Activated CD4-positive, alpha-beta T cell treated with anti-CD3 and anti-CD28 coated beads for 36 hours (primary cell): ENCODE measurements at regions of chr1 and their contacts with region 1.

Region 1: DNA sequence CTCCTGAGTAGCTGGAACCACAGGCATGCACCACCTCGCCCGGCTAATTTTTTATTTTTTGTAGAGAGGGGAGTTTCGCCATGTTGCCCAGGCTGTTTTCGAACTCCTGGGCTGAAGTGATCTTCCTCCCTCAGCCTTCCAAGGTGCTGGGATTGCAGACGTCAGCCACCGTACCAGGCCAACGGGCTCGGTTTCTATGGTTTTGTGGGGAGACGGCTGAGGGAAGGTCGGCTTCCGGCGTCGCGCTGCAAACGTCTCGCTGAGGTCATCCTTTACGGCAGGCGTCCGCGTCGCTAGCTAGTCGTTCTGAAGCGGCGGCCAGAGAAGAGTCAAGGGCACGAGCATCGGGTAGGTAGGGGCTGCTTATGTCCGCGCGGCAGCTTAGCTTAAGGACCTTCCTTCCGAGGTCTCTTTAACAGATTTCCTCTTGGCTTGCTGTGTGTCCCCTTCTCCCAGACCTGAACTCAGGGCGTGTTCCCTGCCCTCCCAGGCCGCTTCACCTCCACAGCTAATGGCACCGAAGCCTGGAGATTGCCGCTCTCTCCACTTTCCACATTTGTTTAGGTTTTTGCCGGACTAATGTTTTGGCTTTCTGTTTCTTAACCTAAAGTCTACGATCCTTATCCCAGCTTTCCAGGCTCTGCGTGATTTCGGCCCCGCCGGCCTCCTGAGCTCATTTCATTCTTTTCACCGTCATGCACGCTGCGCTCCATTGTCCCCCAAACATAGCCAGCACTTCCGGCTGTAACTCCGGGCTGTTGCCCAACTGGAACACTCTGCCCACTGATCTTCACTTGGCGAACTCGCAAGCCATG is at the start of gene NDUFS5:
- DNase-seq: peak; percentile 93
- ATAC-seq: peak; percentile 90
- H3K4me3 Mint-ChIP-seq: peak within 1 kb of the TSS; percentile 87
- H3K27ac Mint-ChIP-seq: peak within 1 kb of the TSS; percentile 99
- H3K4me1 Mint-ChIP-seq: peaks cover 30% of the 10 kb centered on the region
- H3K27me3 Mint-ChIP-seq: no peaks in the 10 kb centered on the region
- total RNA-seq, gene NDUFS5: 150 to 220 TPM

Region 2: DNA sequence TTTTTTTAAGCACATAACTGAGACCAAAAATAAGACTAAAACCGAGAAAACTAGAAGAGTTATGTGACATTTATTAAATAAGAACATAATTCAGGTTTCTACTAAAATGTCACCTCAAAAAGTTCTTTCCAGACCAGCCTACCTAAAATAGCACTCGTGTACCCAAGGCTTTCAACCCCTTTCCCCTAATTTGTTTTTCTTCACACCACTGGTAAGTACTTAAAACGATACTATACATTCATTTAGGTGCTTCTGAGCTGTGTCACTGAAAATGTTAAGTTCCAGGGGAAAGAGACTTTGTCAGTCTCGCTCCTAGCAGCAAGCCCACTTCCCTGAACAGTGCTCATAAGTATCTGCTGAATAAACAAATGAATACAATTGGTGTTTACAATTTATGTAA is 173.5 kb before region 1 on chr1:
- CTCF ChIA-PET with region 1: no interaction called
- POLR2A ChIA-PET with region 1: no interaction called
- intact Hi-C with region 1: loop called in 1 of 2 experiments (anchors 2 kb)
- DNase-seq: peak; percentile 44
- ATAC-seq: peak; percentile 97
- H3K4me3 Mint-ChIP-seq: peak overlapping the region; percentile 32
- H3K27ac Mint-ChIP-seq: peak overlapping the region; percentile 87
- H3K4me1 Mint-ChIP-seq: peaks cover 44% of the 10 kb centered on the region
- H3K27me3 Mint-ChIP-seq: no peaks in the 10 kb centered on the region

Region 3: DNA sequence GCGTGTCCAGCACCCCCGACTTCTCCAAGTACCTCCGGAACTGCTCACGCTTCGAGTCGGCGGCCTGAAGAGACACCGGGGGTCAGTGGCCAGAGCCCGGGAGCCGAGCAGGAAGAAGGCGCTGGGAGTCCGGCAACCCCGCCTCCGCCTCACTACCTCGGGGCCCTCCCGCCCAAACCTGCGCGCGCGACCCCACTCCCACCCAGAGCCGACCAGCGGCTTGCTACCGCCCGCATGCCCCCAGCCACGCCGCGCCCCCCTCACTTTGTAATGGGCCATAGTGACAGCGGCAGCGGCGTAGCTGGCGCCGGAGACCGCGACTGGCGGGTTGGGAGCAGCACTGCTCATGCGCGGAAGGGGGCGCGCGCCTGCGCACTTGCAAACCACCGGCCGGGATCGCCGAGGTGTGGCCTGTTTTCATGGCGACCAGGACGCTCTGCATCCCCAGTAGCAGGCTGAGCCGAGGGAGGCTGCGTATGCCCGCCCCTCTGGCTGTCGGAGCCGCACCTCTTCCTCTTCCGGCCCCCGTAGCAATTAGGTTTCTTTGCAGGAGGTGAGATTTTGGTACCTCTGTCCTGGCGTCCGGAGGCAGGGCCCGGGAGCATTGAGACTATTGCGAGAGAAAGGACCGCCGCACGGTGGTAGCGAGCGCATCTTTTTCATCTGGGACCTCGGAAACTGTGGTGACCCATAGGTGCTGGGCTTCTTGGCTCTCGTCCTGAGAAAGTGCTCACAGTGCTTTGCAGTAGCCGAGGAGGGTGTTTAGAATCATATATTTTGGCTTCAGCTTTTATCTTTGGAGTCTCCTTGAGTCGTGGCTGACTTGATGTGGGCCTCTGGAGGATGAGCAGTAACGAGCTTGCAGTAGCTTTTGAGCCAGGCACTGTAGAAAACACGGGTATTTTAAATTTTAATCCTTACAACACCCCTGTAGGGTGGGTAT is 153.0 kb before region 1 on chr1 and contains the start of gene MYCBP:
- CTCF ChIA-PET with region 1: no interaction called
- POLR2A ChIA-PET with region 1: interaction called, 8 read pairs
- intact Hi-C with region 1: loop called (anchors 1 to 2 kb)
- DNase-seq: peak; percentile 97
- ATAC-seq: peak; percentile 99
- H3K4me3 Mint-ChIP-seq: peak within 1 kb of the TSS; percentile 92
- H3K27ac Mint-ChIP-seq: peak within 1 kb of the TSS; percentile 83
- H3K4me1 Mint-ChIP-seq: peaks cover 26% of the 10 kb centered on the region
- H3K27me3 Mint-ChIP-seq: no peaks in the 10 kb centered on the region
- total RNA-seq, gene MYCBP: 44.4 to 46.8 TPM

Region 4: GRCh38 chr1:38941527-38942019 is 84.7 kb before region 1 on chr1 and contains the start of gene RHBDL2:
- CTCF ChIA-PET with region 1: no interaction called
- POLR2A ChIA-PET with region 1: no interaction called
- intact Hi-C with region 1: no loop called
- DNase-seq: no peak
- ATAC-seq: no peak
- H3K4me3 Mint-ChIP-seq: no peak within 1 kb of the TSS
- H3K27ac Mint-ChIP-seq: peak within 1 kb of the TSS; percentile 11
- H3K4me1 Mint-ChIP-seq: no peaks in the 10 kb centered on the region
- H3K27me3 Mint-ChIP-seq: peaks cover 2% of the 10 kb centered on the region
- total RNA-seq, gene RHBDL2: not detected

Region 5: DNA sequence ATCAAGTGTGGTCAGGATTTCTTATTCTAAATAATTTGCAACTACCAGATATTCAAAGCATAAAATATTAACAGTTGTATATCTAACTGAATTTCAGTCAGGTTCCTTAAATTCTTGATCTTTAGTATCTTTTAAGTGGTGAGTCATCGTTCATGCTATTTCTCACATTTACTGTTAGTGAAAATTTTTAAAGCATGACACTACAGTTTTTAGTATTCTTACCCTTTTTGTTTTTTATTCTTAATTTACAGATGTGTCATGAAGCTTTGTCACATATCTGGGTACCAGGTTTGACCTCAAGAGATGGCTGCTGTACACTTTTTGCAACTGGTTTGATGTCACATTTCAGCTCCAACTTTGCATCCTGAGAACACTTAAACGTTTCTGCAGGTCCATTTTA is 22.5 kb before region 1 on chr1:
- CTCF ChIA-PET with region 1: interaction called, 9 read pairs
- POLR2A ChIA-PET with region 1: interaction called, 8 read pairs
- intact Hi-C with region 1: loop called in 1 of 2 experiments (anchors 1 kb)
- DNase-seq: no peak
- ATAC-seq: peak; percentile 69
- H3K4me3 Mint-ChIP-seq: no peak overlapping the region
- H3K27ac Mint-ChIP-seq: peak overlapping the region; percentile 57
- H3K4me1 Mint-ChIP-seq: peaks cover 44% of the 10 kb centered on the region
- H3K27me3 Mint-ChIP-seq: no peaks in the 10 kb centered on the region

Region 6: GRCh38 chr1:39098546-39099250 is 72.4 kb after region 1 on chr1:
- CTCF ChIA-PET with region 1: interaction called, 11 read pairs
- POLR2A ChIA-PET with region 1: no interaction called
- intact Hi-C with region 1: no loop called
- DNase-seq: peak; percentile 77
- ATAC-seq: peak; percentile 88
- H3K4me3 Mint-ChIP-seq: no peak overlapping the region
- H3K27ac Mint-ChIP-seq: no peak overlapping the region
- H3K4me1 Mint-ChIP-seq: peaks cover 22% of the 10 kb centered on the region
- H3K27me3 Mint-ChIP-seq: peaks cover 2% of the 10 kb centered on the region

Region 7: DNA sequence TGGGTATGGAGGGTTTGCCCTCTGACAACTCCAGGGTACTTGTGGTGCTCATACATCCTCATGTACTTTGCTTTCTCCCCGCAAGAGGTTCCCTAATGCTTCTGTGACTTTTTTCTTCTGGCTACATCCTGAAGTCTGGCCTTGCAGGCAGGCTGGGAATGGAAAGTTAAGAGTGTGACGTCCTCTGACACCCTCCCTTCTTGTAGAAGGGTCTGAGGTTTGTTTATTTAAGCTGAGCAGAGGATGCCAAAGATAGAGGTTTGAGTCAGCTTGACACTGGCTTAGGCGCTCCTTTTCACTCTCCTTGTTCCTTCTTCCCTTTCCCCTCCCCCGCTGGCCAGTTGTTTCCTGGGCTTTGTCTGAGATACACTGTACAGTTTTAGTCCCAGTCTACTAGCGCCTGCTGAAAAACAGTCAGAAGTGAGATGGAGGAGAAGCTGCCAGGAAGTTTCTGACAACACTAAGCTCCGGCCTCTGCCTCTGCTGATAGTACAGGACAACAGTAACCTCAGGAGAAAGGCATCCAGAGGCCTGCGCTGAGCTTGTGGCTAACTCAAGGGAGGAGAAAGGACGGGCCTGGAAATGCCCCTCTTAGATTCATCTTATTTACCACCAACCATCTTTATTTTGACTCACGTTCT is 178.3 kb after region 1 on chr1 and contains the start of gene MACF1:
- CTCF ChIA-PET with region 1: no interaction called
- POLR2A ChIA-PET with region 1: no interaction called
- intact Hi-C with region 1: loop called in 1 of 2 experiments (anchors 5 kb)
- DNase-seq: peak; percentile 61
- ATAC-seq: peak; percentile 53
- H3K4me3 Mint-ChIP-seq: peak within 1 kb of the TSS; percentile 84
- H3K27ac Mint-ChIP-seq: peak within 1 kb of the TSS; percentile 96
- H3K4me1 Mint-ChIP-seq: peaks cover 65% of the 10 kb centered on the region
- H3K27me3 Mint-ChIP-seq: no peaks in the 10 kb centered on the region
- total RNA-seq, gene MACF1: 192 to 195 TPM